MCF 10A (cell line): ENCODE measurements at regions of chr20 and their contacts with region 1.

Region 1: GRCh38 chr20:58447511-58448391 is 58.7 kb downstream of the VAPB start:
- DNase-seq: peak; percentile 71
- H3K4me3 Mint-ChIP-seq: no peak overlapping the region
- H3K27ac Mint-ChIP-seq: peak overlapping the region; percentile 58
- H3K4me1 Mint-ChIP-seq: no peaks in the 10 kb centered on the region
- H3K27me3 Mint-ChIP-seq: no peaks in the 10 kb centered on the region
- CTCF ChIP-seq: peak; percentile 79

Region 2: DNA sequence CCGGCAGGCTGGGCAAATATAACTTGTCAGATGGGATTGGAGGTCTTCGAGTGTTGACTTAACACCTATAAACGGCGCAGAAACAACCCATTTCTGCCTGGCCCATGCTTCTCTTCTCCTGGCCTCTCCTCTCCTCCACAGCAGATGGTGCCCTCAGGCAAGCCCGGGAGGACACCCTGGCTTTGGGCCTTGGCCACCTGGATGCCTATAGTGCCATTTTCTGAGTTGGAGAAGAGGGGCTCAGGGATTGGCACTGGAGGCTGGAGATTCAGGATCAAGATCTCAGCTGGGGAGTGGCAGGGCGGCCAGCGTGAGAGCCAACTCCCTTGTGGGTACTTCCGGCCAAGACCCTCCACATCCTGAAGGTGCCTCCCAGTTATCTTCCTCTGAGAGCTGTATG is 526.1 kb before region 1 on chr20:
- CTCF ChIA-PET with region 1: no interaction called
- POLR2A ChIA-PET with region 1: no interaction called
- intact Hi-C with region 1: no loop called
- DNase-seq: no peak
- H3K4me3 Mint-ChIP-seq: no peak overlapping the region
- H3K27ac Mint-ChIP-seq: no peak overlapping the region
- H3K4me1 Mint-ChIP-seq: no peaks in the 10 kb centered on the region
- H3K27me3 Mint-ChIP-seq: peaks cover 52% of the 10 kb centered on the region
- CTCF ChIP-seq: no peak

Region 3: DNA sequence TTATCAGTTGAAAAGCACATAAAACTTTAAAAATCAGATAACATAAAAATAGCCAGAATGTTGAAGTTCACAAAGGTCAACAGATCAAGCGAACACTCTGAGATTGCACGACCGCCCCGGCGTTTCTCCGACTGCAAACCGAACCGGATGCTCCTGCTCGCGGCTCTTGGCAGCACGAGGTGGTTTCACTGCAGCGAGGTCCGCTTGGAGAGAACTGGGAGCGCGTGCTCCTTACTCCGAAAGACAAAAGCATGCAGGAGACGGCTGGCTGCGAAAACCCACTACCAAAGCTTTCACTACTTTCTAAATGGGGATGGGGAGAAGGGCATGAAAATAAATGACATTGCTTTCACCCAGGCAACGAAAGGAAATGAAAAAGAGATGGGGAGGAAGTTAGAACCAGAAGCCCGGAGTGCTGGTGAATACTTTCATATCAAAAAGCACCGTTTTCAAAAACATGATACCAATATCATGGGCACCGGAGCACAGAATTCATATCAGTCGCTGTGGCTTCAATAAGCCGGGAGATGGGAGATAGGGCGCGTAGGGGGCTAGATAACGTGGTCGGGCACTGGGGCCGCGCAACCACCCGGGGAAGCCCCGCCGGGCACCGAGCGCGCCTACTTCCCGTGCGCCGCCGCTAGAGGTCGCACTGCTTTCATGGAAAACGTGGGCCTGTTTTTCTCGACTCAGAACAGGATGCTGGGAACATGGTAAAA is 211.0 kb before region 1 on chr20:
- CTCF ChIA-PET with region 1: interaction called, 58 read pairs
- POLR2A ChIA-PET with region 1: interaction called, 4 read pairs
- intact Hi-C with region 1: loop called (anchors 1 kb)
- DNase-seq: peak; percentile 71
- H3K4me3 Mint-ChIP-seq: peak overlapping the region; percentile 77
- H3K27ac Mint-ChIP-seq: no peak overlapping the region
- H3K4me1 Mint-ChIP-seq: no peaks in the 10 kb centered on the region
- H3K27me3 Mint-ChIP-seq: no peaks in the 10 kb centered on the region
- CTCF ChIP-seq: peak; percentile 96

Region 4: DNA sequence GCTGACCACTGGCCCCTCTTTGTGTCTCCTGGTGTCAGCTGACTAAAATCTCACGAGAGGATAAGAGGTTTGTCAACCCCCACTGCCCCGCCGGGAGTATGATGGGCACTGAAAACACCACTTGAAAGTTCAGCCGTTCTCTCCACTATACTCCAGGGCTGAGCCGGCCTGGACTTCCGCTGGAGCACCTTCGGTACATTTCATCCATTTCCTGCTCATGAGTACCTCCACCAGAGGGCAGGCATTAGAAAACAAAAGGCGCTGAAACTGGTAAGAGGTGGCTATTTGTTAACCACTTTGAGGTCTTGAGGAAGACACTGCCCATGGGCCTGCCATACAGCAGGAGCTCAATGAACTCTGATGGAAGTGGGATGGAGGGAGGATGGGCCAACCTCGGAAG is 201.4 kb before region 1 on chr20:
- CTCF ChIA-PET with region 1: interaction called, 26 read pairs
- POLR2A ChIA-PET with region 1: no interaction called
- intact Hi-C with region 1: no loop called
- DNase-seq: peak; percentile 29
- H3K4me3 Mint-ChIP-seq: no peak overlapping the region
- H3K27ac Mint-ChIP-seq: no peak overlapping the region
- H3K4me1 Mint-ChIP-seq: no peaks in the 10 kb centered on the region
- H3K27me3 Mint-ChIP-seq: no peaks in the 10 kb centered on the region
- CTCF ChIP-seq: peak; percentile 14

Region 5: DNA sequence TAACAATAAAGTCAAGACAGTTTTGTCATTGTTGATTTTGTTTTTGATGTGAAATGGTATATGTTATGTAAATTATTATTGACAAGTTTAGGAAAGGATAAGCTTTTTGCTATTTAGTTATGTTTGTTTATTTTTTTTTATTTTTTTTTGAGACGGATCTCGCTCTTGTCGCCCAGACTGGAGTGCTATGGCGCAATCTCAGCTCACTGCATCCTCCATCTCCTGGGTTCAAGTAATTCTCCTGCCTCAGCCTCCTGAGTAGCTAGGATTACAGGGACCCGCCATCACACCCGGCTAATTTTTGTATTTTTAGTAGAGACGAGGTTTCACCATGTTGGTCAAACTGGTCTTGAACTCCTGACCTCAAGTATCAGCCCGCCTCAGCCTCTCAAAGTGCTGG is 109.9 kb before region 1 on chr20:
- CTCF ChIA-PET with region 1: no interaction called
- POLR2A ChIA-PET with region 1: no interaction called
- intact Hi-C with region 1: no loop called
- DNase-seq: no peak
- H3K4me3 Mint-ChIP-seq: no peak overlapping the region
- H3K27ac Mint-ChIP-seq: no peak overlapping the region
- H3K4me1 Mint-ChIP-seq: peaks cover 16% of the 10 kb centered on the region
- H3K27me3 Mint-ChIP-seq: no peaks in the 10 kb centered on the region
- CTCF ChIP-seq: no peak

Region 6: DNA sequence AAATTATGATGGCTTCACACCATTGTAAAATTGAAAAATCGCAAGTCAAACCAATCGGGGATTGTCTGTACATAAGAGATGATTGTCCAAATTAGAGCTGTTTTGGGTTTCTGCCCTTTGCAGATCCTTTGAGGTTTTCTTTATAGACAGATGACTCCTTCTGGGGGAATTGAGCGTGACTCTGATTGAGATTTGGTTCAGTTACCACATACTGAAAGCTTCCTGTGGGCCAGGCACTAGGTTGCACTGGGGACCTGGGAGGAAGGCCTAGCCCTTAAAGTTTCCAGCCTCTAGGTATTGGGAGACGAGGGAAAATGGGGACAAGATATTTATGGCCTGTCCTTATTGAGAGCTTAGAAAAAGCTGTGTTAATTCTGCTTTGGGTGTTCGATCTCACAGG is 49.5 kb before region 1 on chr20:
- CTCF ChIA-PET with region 1: interaction called, 21 read pairs
- POLR2A ChIA-PET with region 1: no interaction called
- intact Hi-C with region 1: no loop called
- DNase-seq: no peak
- H3K4me3 Mint-ChIP-seq: no peak overlapping the region
- H3K27ac Mint-ChIP-seq: peak overlapping the region; percentile 32
- H3K4me1 Mint-ChIP-seq: peaks cover 10% of the 10 kb centered on the region
- H3K27me3 Mint-ChIP-seq: no peaks in the 10 kb centered on the region
- CTCF ChIP-seq: no peak

Region 7: DNA sequence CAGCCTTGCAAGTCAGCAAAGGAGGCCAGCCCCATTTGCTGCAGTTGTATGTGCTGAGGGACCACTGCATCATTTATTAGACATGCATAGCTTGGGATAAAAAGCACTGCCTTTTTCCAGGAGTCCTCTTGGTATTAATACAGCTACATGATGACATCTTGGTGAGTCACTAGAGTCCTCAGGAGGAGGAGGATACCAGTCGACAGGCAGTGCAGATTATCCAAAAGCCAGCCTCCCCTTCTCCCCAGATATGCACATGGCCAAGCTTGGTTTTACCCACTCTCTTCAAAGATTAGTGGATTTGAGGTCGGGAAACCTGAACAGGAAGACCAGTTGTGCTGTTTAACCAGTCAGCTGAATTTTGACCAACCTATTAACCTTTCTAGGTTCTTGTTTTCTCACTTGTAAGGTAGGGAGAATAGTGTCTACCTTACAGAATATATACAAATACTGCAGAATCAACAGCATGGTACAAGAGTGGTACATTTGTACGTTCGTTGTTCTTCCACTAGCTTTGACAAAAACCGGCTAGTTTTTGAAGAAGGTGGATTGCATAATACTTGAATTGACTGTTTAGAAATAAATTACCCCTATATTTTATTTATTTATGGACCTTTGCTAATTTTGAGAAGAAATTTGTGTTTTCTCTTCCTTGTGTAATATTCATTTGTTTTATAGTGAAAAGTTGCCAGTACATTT is 26.8 kb before region 1 on chr20:
- CTCF ChIA-PET with region 1: interaction called, 13 read pairs
- POLR2A ChIA-PET with region 1: no interaction called
- intact Hi-C with region 1: no loop called
- DNase-seq: peak; percentile 61
- H3K4me3 Mint-ChIP-seq: no peak overlapping the region
- H3K27ac Mint-ChIP-seq: no peak overlapping the region
- H3K4me1 Mint-ChIP-seq: peaks cover 14% of the 10 kb centered on the region
- H3K27me3 Mint-ChIP-seq: no peaks in the 10 kb centered on the region
- CTCF ChIP-seq: no peak

Region 8: DNA sequence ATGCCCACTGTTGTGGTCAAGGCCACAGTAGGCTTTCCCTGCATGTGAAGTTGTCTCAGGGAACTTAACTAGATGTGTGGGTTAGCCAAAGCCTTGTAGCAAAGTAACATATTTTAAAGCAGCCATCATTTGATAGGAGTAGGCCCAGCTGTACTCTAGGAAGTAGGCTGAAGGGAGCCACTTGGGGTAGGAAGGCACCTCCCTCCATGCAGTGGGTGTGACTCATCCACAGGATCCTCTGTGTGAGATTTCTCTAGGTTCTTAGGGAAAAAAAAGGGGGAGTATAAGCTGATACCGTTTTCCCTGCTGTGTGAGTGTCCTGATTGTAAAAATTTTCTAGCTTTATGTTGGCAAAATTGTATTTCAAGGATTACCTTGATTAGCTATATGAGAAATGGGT is 14.0 kb before region 1 on chr20:
- CTCF ChIA-PET with region 1: interaction called, 15 read pairs
- POLR2A ChIA-PET with region 1: no interaction called
- intact Hi-C with region 1: no loop called
- DNase-seq: peak; percentile 34
- H3K4me3 Mint-ChIP-seq: no peak overlapping the region
- H3K27ac Mint-ChIP-seq: peak overlapping the region; percentile 16
- H3K4me1 Mint-ChIP-seq: peaks cover 14% of the 10 kb centered on the region
- H3K27me3 Mint-ChIP-seq: no peaks in the 10 kb centered on the region
- CTCF ChIP-seq: no peak

Region 9: GRCh38 chr20:58458180-58459057 is 10.7 kb after region 1 on chr20:
- CTCF ChIA-PET with region 1: interaction called, 21 read pairs
- POLR2A ChIA-PET with region 1: interaction called, 3 read pairs
- intact Hi-C with region 1: no loop called
- DNase-seq: no peak
- H3K4me3 Mint-ChIP-seq: no peak overlapping the region
- H3K27ac Mint-ChIP-seq: no peak overlapping the region
- H3K4me1 Mint-ChIP-seq: peaks cover 8% of the 10 kb centered on the region
- H3K27me3 Mint-ChIP-seq: no peaks in the 10 kb centered on the region
- CTCF ChIP-seq: no peak

Region 10: GRCh38 chr20:58511364-58511763 is 63.6 kb after region 1 on chr20:
- CTCF ChIA-PET with region 1: no interaction called
- POLR2A ChIA-PET with region 1: no interaction called
- intact Hi-C with region 1: no loop called
- DNase-seq: peak; percentile 14
- H3K4me3 Mint-ChIP-seq: no peak overlapping the region
- H3K27ac Mint-ChIP-seq: no peak overlapping the region
- H3K4me1 Mint-ChIP-seq: peaks cover 7% of the 10 kb centered on the region
- H3K27me3 Mint-ChIP-seq: peaks cover 15% of the 10 kb centered on the region
- CTCF ChIP-seq: no peak

Region 11: GRCh38 chr20:58800134-58800656 is 352.4 kb after region 1 on chr20:
- CTCF ChIA-PET with region 1: no interaction called
- POLR2A ChIA-PET with region 1: no interaction called
- intact Hi-C with region 1: no loop called
- DNase-seq: no peak
- H3K4me3 Mint-ChIP-seq: no peak overlapping the region
- H3K27ac Mint-ChIP-seq: no peak overlapping the region
- H3K4me1 Mint-ChIP-seq: no peaks in the 10 kb centered on the region
- H3K27me3 Mint-ChIP-seq: peaks cover 94% of the 10 kb centered on the region
- CTCF ChIP-seq: no peak